ENCODE measurements at regions of chr16 and their contacts with region 1.

Region 1: DNA sequence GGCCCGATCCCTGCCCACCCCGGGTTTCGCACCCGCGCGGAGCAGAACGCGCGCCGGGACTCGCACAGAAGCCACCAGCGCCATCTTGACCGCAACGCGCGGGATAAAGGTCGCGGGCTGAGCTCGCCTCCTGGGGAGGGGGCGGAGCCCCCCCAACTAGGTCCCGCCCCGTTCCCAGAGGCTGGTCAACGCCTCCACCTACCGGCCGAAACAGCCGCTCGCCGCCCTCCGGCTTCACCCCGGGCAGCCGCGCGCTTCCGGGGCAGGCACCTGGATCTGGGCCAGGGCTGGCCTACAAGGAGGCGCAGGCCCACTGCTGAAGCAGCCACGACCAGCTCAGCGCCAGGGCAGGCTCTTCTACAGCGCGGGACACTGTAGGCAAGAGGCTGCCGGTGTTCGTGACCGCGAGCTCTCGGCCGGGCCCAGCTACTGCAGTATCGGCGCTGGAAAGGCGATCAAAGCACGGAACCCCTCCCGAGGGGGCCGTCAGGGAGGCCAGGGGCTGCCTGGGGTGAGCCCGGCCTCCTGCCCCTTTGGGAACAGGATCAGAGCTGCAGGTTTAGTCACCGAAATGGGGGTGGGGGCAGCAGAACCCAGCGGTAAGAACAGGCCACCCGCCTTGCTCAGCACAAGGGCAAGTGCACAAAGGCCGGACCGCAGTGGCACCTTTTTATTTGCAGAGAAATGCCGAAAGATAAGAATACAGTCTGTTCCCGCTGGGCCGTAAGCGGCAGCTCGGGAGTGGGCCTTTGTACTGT is at the start of gene ECI1:
- DNase-seq: peak; percentile 87
- H3K4me3 Mint-ChIP-seq: peak within 1 kb of the TSS; percentile 93
- H3K27ac Mint-ChIP-seq: peak within 1 kb of the TSS; percentile 95
- H3K4me1 Mint-ChIP-seq: peaks cover 13% of the 10 kb centered on the region
- H3K27me3 Mint-ChIP-seq: no peaks in the 10 kb centered on the region

Region 2: GRCh38 chr16:2194852-2195321 is 56.8 kb before region 1 on chr16:
- CTCF ChIA-PET with region 1: interaction called, 16 read pairs
- DNase-seq: peak; percentile 72
- H3K4me3 Mint-ChIP-seq: peak overlapping the region; percentile 41
- H3K27ac Mint-ChIP-seq: no peak overlapping the region
- H3K4me1 Mint-ChIP-seq: peaks cover 4% of the 10 kb centered on the region
- H3K27me3 Mint-ChIP-seq: peaks cover 73% of the 10 kb centered on the region

Region 3: DNA sequence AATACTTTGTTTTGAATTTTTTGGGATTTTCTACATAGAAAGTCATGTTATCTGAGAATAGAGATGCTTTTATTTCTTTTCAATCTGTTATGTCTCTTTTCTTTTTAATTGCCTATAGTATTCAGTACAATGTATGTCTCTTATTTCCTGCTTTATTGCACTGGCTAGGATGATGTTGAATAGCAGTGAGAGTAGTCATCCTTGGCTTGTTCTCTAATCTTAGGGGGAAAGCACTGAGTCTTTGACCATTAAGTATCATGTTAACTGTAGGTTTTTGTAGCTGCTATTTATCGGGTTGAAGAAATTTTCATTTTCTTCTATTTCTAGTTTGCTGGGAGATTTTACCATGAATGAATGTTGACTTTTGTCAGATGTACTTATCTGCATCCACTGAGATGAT is 98.8 kb after region 1 on chr16:
- CTCF ChIA-PET with region 1: no interaction called
- DNase-seq: no peak
- H3K4me3 Mint-ChIP-seq: no peak overlapping the region
- H3K27ac Mint-ChIP-seq: no peak overlapping the region
- H3K4me1 Mint-ChIP-seq: no peaks in the 10 kb centered on the region
- H3K27me3 Mint-ChIP-seq: peaks cover 35% of the 10 kb centered on the region

Measured in activated naive CD4-positive, alpha-beta T cell treated with anti-CD3 and anti-CD28 coated beads, Interleukin-2, amount 10 ng/mL, durations not matched to agents 7 days and 5 days (primary cell).